Activated naive CD4-positive, alpha-beta T cell treated with anti-CD3 and anti-CD28 coated beads for 36 hours (primary cell): ENCODE measurements at regions of chr17 and their contacts with region 1.

Region 1: DNA sequence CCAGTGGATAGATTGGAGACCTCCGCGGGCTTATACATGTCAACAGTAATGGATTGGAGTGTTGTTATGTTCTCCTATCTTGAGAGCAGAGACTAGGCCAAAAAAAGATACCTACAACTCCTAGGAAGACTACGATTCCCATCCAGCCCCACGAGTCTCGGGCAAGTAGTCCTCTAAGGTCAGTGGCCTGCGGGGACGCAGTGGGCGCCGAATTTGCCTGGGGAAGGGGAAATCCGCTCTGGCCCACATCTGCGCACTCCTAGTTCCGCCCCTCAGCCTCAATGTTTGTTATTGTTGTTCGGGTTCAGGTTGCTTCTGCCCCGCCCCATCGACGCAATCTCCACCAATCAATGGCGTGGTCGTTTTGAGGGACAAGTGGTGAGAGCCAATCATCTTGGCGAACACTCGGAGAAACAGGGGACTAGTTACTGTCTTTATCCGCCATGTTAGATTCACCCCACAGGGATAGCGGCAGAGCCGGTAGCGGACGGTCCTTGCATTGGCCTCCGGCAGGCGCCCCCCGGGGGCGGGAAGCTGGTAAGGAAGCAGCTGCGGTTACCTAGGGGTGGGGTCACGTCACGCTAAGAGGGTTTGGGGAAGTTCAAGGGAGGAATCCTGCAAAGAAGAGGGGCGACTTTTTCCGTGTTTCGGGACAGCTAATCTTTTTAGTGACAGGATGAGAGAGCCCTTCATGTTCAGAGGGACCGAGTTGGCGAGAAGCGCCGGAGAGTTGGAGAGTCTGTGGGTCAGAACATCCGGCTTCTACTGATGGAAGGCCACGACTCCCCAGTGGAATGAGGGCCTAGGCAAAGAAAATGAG is at the start of gene NBR1:
- DNase-seq: peak; percentile 99
- H3K4me3 Mint-ChIP-seq: no peak within 1 kb of the TSS
- H3K27ac Mint-ChIP-seq: no peak within 1 kb of the TSS
- H3K4me1 Mint-ChIP-seq: peaks cover 36% of the 10 kb centered on the region
- H3K27me3 Mint-ChIP-seq: no peaks in the 10 kb centered on the region
- total RNA-seq, gene NBR1: 62.1 to 66.8 TPM

Region 2: GRCh38 chr17:42276359-42276608 is 894.7 kb before region 1 on chr17 and contains the start of gene STAT5B:
- CTCF ChIA-PET with region 1: no interaction called
- intact Hi-C with region 1: loop called (anchors 5 kb)
- DNase-seq: peak; percentile 62
- H3K4me3 Mint-ChIP-seq: peak within 1 kb of the TSS; percentile 96
- H3K27ac Mint-ChIP-seq: peak within 1 kb of the TSS; percentile 97
- H3K4me1 Mint-ChIP-seq: peaks cover 35% of the 10 kb centered on the region
- H3K27me3 Mint-ChIP-seq: no peaks in the 10 kb centered on the region
- total RNA-seq, gene STAT5B: 185 to 192 TPM

Region 3: DNA sequence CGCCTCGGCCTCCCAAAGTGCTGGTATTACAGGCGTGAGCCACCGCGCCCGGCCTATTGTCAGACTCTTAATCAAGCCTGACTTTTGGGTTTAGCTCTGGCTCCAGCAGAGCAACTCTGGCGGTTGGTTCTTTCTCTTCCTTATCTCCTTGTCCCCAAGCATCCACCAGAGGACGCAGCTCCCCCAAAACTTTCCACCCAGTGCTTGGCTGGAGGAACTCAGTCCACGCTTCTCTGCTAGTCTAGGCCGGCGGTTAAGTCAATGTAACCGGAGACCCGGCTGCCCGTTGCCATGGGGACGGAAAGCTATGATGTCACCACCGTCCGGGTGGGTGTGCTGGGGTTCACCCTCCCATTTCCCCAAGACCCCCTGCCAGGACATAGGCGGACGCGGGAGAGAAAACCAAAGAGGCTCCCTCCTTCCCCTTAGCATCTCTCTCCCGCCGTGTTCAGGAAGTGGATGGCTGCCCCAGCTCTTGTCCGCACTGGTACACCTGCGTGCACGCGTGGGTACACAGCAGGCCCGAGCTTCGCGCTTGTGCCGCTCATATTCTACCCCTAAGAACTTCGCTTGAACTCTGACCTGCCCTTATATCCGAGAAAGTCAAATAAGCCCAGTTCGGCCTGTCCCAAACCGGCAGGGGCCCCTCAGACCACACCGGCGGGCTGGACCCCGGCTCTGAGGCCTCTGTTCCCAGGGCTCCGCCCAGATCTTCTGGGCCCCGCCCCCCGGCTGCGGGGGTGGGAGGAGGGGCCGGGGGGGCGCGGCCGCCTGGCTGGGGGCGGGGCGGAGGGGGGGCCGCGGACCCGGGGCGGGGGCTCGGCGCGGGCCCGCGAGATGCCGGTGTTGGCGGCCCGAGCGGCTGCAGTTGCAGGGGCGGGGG is 146.3 kb before region 1 on chr17 and contains the start of gene RND2:
- CTCF ChIA-PET with region 1: interaction called, 3 read pairs
- intact Hi-C with region 1: loop called (anchors 1 kb)
- DNase-seq: peak; percentile 90
- H3K4me3 Mint-ChIP-seq: peak within 1 kb of the TSS; percentile 80
- H3K27ac Mint-ChIP-seq: no peak within 1 kb of the TSS
- H3K4me1 Mint-ChIP-seq: peaks cover 24% of the 10 kb centered on the region
- H3K27me3 Mint-ChIP-seq: no peaks in the 10 kb centered on the region
- total RNA-seq, gene RND2: not detected

Region 4: DNA sequence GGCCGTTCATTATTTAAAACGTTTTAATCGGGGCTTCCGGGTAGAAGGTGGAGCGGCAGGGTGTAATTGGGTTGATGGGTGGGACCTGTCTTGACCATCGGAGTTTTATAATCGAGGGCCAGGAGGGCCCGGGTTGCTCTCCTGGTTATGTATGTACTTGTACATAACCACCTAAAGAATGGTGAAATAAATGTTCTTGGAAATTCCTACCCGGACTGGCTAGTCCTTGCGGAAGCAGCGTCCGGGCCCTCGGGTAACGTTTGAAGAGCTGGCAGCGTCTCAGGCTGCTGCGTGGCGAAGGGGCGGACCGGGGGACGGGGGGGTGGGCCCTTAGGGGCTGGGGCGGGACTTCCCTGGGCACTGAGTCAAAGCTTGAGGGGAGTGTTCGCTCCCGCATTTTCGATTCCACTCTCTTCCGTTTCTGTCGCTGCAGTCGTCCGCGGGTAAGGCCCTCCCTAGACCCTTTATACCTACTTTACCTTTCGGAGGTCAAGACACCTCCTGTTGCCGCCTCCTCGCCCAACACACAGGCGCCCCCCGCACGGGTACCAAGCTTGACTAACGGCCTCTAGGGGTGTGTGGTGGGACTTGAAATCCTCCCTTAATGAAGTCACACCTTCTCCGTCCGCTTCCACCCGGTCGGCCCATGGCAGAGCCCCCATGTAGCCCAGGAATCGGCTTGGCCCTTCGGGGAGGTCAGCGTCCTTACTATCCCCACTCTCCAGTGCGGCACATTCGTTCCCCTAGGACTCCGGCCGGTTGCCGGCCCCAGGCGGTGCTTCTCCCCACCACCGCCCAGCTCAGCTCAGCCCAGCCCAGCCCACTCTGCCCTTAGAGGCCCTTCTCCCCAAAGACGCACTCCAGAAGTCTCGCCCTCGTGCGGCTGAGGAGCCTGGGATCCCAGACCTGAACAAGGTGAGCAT is 40.8 kb after region 1 on chr17 and contains the start of gene TMEM106A:
- CTCF ChIA-PET with region 1: no interaction called
- intact Hi-C with region 1: loop called (anchors 1 kb)
- DNase-seq: peak; percentile 82
- H3K4me3 Mint-ChIP-seq: peak within 1 kb of the TSS; percentile 94
- H3K27ac Mint-ChIP-seq: peak within 1 kb of the TSS; percentile 90
- H3K4me1 Mint-ChIP-seq: peaks cover 26% of the 10 kb centered on the region
- H3K27me3 Mint-ChIP-seq: no peaks in the 10 kb centered on the region
- total RNA-seq, gene TMEM106A: 5.8 to 7.1 TPM

Region 5: GRCh38 chr17:43388359-43389045 is 217.5 kb after region 1 on chr17:
- CTCF ChIA-PET with region 1: no interaction called
- intact Hi-C with region 1: loop called (anchors 2 kb)
- DNase-seq: peak; percentile 92
- H3K4me3 Mint-ChIP-seq: peak overlapping the region; percentile 82
- H3K27ac Mint-ChIP-seq: peak overlapping the region; percentile 93
- H3K4me1 Mint-ChIP-seq: peaks cover 13% of the 10 kb centered on the region
- H3K27me3 Mint-ChIP-seq: no peaks in the 10 kb centered on the region